PC-9 (cell line): ENCODE measurements at regions of chr3 and their contacts with region 1.

Region 1: GRCh38 chr3:160129459-160130061 is 95.7 kb upstream of the C3orf80 start:
- DNase-seq: peak in 1 of 2 experiments; percentile 77
- H3K4me3 ChIP-seq: 0 out of 2 replicates have a peak overlapping the region, but pooled peaks have one; percentile 7
- H3K27ac ChIP-seq: peak overlapping the region; percentile 80
- H3K4me1 ChIP-seq: peaks cover 30% of the 10 kb centered on the region
- H3K27me3 ChIP-seq: no peaks in the 10 kb centered on the region
- CTCF ChIP-seq: no peak

Region 2: GRCh38 chr3:160038862-160039562 is 90.5 kb before region 1 on chr3:
- CTCF ChIA-PET with region 1: interaction called, 5 read pairs
- POLR2A ChIA-PET with region 1: interaction called, 3 read pairs
- intact Hi-C with region 1: loop called (anchors 10 kb)
- DNase-seq: peak in 1 of 2 experiments; percentile 43
- H3K4me3 ChIP-seq: peak overlapping the region; percentile 16; the same call in 1 of the 2 replicates
- H3K27ac ChIP-seq: no peak overlapping the region
- H3K4me1 ChIP-seq: no peaks in the 10 kb centered on the region
- H3K27me3 ChIP-seq: no peaks in the 10 kb centered on the region
- CTCF ChIP-seq: no peak

Region 3: GRCh38 chr3:160052385-160053047 is 77.0 kb before region 1 on chr3:
- CTCF ChIA-PET with region 1: no interaction called
- POLR2A ChIA-PET with region 1: no interaction called
- intact Hi-C with region 1: no loop called
- DNase-seq: no peak
- H3K4me3 ChIP-seq: no peak overlapping the region
- H3K27ac ChIP-seq: no peak overlapping the region
- H3K4me1 ChIP-seq: no peaks in the 10 kb centered on the region
- H3K27me3 ChIP-seq: no peaks in the 10 kb centered on the region
- CTCF ChIP-seq: no peak

Region 4: DNA sequence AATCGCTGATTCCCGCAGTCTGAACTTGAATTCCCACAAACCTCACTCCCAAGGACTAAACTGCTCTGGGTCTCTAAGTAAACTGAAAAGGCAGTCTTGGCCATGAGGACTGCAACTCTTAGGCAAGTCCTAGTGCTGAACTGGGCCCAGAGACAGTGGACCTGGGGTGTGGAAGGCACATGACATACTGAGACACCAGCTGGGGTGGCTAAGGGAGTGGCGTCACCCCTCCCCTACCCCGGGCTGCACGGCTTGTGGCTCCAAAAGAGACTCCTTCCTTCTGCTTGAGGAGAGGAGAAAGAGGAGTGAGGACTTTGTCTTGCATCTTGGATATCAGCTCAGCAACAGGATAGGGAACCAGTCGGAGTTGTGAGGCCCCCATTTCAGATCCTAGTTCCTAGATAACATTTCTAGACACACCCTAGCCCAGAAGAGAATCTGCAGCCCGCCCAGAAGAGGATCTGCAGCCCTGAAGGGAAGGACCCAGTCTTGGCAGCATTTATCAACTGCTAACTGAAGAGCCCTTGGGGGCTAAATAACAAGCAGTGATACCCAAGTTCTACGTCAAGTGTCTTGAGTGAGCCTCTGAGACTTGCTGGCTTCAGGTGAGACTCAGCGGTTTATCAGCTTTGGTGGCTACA is 15.1 kb before region 1 on chr3:
- CTCF ChIA-PET with region 1: no interaction called
- POLR2A ChIA-PET with region 1: interaction called, 10 read pairs
- intact Hi-C with region 1: no loop called
- DNase-seq: no peak
- H3K4me3 ChIP-seq: no peak overlapping the region
- H3K27ac ChIP-seq: no peak overlapping the region
- H3K4me1 ChIP-seq: no peaks in the 10 kb centered on the region
- H3K27me3 ChIP-seq: no peaks in the 10 kb centered on the region
- CTCF ChIP-seq: no peak

Region 5: GRCh38 chr3:160157321-160157720 is 27.8 kb after region 1 on chr3:
- CTCF ChIA-PET with region 1: no interaction called
- POLR2A ChIA-PET with region 1: no interaction called
- intact Hi-C with region 1: no loop called
- DNase-seq: no peak
- H3K4me3 ChIP-seq: no peak overlapping the region
- H3K27ac ChIP-seq: no peak overlapping the region
- H3K4me1 ChIP-seq: no peaks in the 10 kb centered on the region
- H3K27me3 ChIP-seq: no peaks in the 10 kb centered on the region
- CTCF ChIP-seq: no peak